HepG2 (cell line): ENCODE measurements at regions of chr14 and their contacts with region 1.

Region 1: DNA sequence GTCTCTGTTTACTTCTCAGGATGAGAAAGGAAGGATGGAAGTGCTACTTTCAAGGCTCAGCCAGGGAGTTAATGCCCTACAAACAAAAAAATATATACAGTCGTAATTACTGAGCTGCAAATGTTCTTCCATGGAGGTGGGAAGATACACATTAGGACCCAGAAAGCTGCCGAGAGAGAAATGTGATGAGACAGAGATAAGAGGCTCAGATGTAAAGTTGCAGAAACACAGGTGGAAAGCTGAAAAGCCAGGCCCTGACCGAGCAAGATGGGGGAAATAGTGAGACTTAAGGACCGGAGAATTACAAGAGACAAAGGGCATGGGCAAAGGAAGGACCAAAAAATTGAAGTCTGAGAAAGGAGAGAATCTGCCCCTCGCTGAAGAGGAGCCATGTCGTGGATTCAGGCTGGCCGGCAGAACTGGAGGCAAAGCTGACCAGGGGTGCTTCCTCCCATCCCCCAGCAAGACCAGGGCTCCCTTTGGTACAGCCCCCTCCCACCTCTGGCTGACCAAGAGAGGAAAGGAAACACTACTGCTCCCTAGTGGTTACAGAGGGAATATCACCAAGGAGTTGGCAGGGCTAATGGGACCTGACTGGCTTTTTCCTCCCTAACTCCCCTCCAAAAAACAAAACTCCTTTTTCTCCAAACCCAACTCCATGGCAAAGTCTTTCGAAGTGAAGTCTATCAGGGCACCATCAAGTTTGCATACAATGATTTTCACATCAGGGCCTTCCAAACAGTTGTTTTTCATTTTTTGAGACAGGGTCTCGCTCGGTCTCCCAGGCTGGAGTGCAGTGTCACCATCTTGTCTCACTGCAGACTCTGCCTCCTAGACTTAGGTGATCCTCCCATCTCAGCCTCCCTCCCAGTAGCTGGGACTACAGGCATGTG is 12.1 kb downstream of the ZFHX2 start:
- DNase-seq: peak; percentile 86
- ATAC-seq: peak; percentile 85
- H3K4me3 ChIP-seq: no peak overlapping the region
- H3K27ac ChIP-seq: no peak overlapping the region
- H3K4me1 ChIP-seq: peaks cover 7% of the 10 kb centered on the region
- H3K27me3 ChIP-seq: no peaks in the 10 kb centered on the region
- CTCF ChIP-seq: peak; percentile 96
- EP300 ChIP-seq: no peak
- POLR2A ChIP-seq: no peak
- RAD21 ChIP-seq: peak; percentile 81

Region 2: DNA sequence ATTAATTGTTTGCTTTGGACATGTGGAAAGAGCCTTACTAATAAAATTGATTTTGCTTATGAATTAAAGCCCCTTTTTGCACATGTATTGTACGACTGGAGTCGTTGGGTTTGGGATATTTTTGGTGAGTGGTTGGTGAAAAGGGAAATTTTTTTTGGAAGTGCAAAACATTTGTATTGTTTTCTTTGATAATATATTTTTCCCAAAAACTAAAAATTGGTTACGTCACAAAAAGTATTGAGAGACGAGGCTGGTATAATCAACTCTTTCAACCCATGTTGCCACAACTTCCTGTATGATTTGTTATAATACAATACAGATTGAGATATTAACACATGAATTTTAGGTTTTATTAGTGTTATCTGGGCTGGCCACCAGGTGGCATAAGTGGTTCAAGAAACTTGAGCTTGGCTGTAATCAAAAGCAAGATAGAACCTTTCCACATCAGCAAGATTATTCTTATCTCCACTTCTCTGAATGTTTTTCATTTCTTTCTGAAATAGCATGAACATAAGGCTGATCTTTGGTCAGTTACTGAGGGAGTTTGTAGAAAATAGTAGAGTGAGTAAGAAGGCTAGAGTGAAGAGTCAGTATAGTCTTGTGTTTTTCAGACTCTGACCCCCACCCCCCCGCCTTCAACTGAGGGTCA is 61.3 kb before region 1 on chr14:
- CTCF ChIA-PET with region 1: interaction called, 58 read pairs
- POLR2A ChIA-PET with region 1: no interaction called
- in situ Hi-C with region 1: no loop called
- intact Hi-C with region 1: loop called (anchors 1 kb)
- DNase-seq: peak; percentile 77
- ATAC-seq: peak; percentile 33
- H3K4me3 ChIP-seq: no peak overlapping the region
- H3K27ac ChIP-seq: no peak overlapping the region
- H3K4me1 ChIP-seq: peaks cover 8% of the 10 kb centered on the region
- H3K27me3 ChIP-seq: no peaks in the 10 kb centered on the region
- CTCF ChIP-seq: peak; percentile 91
- EP300 ChIP-seq: no peak
- POLR2A ChIP-seq: no peak
- RAD21 ChIP-seq: peak; percentile 84

Region 3: GRCh38 chr14:23483236-23483854 is 56.1 kb before region 1 on chr14:
- CTCF ChIA-PET with region 1: interaction called, 58 read pairs
- POLR2A ChIA-PET with region 1: no interaction called
- in situ Hi-C with region 1: no loop called
- intact Hi-C with region 1: loop called (anchors 1 kb)
- DNase-seq: peak; percentile 69
- ATAC-seq: peak; percentile 96
- H3K4me3 ChIP-seq: no peak overlapping the region
- H3K27ac ChIP-seq: no peak overlapping the region
- H3K4me1 ChIP-seq: peaks cover 6% of the 10 kb centered on the region
- H3K27me3 ChIP-seq: no peaks in the 10 kb centered on the region
- CTCF ChIP-seq: peak; percentile 84
- EP300 ChIP-seq: no peak
- POLR2A ChIP-seq: no peak
- RAD21 ChIP-seq: peak; percentile 80

Region 4: DNA sequence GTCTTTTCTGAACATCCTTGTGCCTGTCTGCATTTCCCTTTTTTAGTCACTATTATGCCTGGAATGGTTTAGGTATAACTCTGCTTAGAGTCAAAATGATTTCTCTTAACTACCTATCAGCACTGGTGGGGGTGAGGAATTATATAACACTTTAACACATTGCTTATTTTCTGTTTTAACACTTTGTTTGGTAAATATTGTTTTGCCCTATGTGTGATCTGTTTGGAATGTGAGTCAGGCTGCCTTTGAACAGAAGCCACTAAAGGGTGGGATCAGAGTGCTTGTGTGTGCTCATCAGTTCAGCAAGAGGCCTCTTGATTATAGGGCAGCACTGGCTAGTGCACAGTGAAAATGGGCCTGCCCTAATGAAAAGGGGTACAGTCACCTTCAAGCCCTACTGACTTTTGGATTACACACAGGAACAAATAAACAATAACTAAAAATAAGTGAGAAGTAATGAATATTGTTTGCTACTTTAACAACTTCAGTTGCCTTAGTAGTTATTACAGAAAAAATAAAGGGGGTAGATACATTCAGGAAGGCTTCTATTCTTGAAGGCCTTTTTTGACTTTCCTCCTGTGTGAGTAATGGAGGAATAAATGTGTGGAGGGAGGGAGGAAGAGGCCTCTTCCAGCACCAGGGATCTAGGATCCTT is 46.7 kb before region 1 on chr14:
- CTCF ChIA-PET with region 1: no interaction called
- POLR2A ChIA-PET with region 1: interaction called, 4 read pairs
- in situ Hi-C with region 1: no loop called
- intact Hi-C with region 1: loop called (anchors 2 kb)
- DNase-seq: peak; percentile 91
- ATAC-seq: peak; percentile 99
- H3K4me3 ChIP-seq: no peak overlapping the region
- H3K27ac ChIP-seq: peak overlapping the region; percentile 3
- H3K4me1 ChIP-seq: peaks cover 28% of the 10 kb centered on the region
- H3K27me3 ChIP-seq: no peaks in the 10 kb centered on the region
- CTCF ChIP-seq: no peak
- EP300 ChIP-seq: peak in 1 of 2 experiments; percentile 75; a peak in 2 of 4 replicates
- POLR2A ChIP-seq: no peak
- RAD21 ChIP-seq: no peak; the same call in 1 of the 2 replicates

Region 5: DNA sequence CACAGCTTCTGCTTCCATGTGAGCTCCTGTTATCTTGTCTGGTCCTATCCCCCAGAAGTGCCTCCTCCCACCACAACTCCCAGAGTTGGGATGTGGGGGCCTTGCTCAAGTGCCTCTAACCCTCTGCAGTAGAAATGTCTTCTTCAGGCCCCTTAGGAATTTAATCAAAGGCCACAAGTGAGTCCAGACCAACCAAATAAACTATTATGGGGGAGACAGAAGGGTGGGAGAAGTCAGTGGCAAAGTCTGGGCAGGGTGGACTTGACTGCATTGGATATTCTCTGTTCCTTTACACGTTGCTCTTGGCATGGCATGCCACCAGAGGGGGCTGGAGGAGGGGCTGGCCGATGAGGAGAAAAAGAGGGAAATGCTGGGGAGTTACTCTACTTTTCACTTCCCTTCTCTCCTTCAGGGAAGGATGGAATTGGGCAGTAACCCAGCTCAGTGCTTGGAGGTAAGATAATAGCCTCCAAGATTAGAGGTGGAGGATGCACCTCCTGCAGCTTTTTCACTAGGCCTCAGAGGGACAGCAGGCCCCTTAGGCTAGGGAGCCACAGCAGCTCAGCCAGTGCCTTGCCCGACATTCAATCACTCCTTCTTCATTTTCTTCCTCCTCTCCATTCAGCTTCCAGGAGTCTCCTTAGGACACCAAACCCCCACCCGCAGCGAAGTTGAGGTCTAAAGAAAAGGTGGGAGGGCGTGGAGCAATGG is 29.3 kb after region 1 on chr14:
- CTCF ChIA-PET with region 1: no interaction called
- POLR2A ChIA-PET with region 1: no interaction called
- in situ Hi-C with region 1: no loop called
- intact Hi-C with region 1: no loop called
- DNase-seq: peak; percentile 80
- ATAC-seq: peak; percentile 47
- H3K4me3 ChIP-seq: peak overlapping the region in 2 of 3 experiments; percentile 68 to 88; a peak in 3 of 6 replicates
- H3K27ac ChIP-seq: no peak overlapping the region
- H3K4me1 ChIP-seq: peaks cover 62% of the 10 kb centered on the region
- H3K27me3 ChIP-seq: peaks cover 2 to 8% of the 10 kb centered on the region in 2 experiments; a peak in 2 of 5 replicates
- CTCF ChIP-seq: peak; percentile 87
- EP300 ChIP-seq: no peak
- POLR2A ChIP-seq: no peak
- RAD21 ChIP-seq: peak; percentile 39; the same call in 1 of the 2 replicates